Activated CD4-positive, alpha-beta memory T cell treated with anti-CD3 and anti-CD28 coated beads, Interleukin-2, amount 10 ng/mL, durations not matched to agents 7 days and 5 days (primary cell): ENCODE measurements at regions of chr19 and their contacts with region 1.

Region 1: GRCh38 chr19:18281082-18282020 is at the start of gene JUND:
- DNase-seq: peak; percentile 99
- H3K4me3 Mint-ChIP-seq: peak within 1 kb of the TSS; percentile 98
- H3K27ac Mint-ChIP-seq: peak within 1 kb of the TSS; percentile 95
- H3K4me1 Mint-ChIP-seq: peaks cover 50% of the 10 kb centered on the region
- H3K27me3 Mint-ChIP-seq: no peaks in the 10 kb centered on the region
- total RNA-seq, gene JUND: 390 to 402 TPM

Region 2: DNA sequence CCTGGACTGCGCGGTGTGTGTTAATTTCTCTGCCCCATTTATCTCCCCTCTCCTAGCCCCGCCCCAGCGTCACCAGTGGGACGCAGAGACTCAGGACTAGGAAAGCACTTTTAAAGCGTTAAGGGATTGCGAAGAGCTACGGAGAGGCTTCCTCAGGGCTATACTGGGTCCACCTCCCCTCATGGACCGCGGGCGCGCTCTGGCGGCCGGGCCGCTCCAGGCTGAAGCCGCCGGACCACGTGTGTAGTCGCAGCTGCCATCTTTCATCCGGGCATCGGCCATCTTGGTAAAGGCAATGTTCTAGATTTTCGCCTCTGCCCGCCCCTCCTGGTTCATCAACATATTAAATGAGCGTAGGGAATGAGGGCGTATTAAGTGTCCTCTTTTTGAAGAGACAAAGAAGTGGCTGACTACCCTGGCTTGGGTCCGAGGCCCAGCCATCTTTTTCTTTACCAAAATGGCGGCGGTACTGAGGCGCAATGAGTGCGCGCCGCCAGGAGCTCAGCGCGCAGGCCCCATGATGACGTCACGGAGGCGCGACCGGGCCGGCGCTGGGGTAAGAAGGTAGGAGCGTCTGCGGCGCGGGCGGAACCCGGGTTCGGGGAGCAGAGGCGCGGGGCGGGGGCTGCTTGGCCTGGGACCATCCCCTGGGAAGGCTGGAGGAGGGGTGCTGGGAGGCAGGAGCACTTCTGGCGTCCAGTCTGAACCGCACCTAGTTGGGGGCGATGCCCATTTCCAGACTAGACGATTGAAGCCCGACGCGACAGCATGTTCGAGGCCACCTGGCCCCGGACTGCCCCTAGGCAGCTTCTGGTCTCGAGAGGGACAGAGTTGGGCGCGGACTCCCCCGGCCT is 348.6 kb before region 1 on chr19 and contains the start of gene CCDC124:
- CTCF ChIA-PET with region 1: no interaction called
- POLR2A ChIA-PET with region 1: no interaction called
- DNase-seq: peak; percentile 95
- H3K4me3 Mint-ChIP-seq: peak within 1 kb of the TSS; percentile 81
- H3K27ac Mint-ChIP-seq: peak within 1 kb of the TSS; percentile 87
- H3K4me1 Mint-ChIP-seq: peaks cover 36% of the 10 kb centered on the region
- H3K27me3 Mint-ChIP-seq: no peaks in the 10 kb centered on the region
- total RNA-seq, gene CCDC124: 59.3 to 60.8 TPM

Region 3: GRCh38 chr19:18091217-18091608 is 190.1 kb before region 1 on chr19:
- CTCF ChIA-PET with region 1: no interaction called
- POLR2A ChIA-PET with region 1: interaction called, 11 read pairs
- DNase-seq: peak; percentile 88
- H3K4me3 Mint-ChIP-seq: peak overlapping the region; percentile 15
- H3K27ac Mint-ChIP-seq: peak overlapping the region; percentile 98
- H3K4me1 Mint-ChIP-seq: peaks cover 64% of the 10 kb centered on the region
- H3K27me3 Mint-ChIP-seq: no peaks in the 10 kb centered on the region

Region 4: DNA sequence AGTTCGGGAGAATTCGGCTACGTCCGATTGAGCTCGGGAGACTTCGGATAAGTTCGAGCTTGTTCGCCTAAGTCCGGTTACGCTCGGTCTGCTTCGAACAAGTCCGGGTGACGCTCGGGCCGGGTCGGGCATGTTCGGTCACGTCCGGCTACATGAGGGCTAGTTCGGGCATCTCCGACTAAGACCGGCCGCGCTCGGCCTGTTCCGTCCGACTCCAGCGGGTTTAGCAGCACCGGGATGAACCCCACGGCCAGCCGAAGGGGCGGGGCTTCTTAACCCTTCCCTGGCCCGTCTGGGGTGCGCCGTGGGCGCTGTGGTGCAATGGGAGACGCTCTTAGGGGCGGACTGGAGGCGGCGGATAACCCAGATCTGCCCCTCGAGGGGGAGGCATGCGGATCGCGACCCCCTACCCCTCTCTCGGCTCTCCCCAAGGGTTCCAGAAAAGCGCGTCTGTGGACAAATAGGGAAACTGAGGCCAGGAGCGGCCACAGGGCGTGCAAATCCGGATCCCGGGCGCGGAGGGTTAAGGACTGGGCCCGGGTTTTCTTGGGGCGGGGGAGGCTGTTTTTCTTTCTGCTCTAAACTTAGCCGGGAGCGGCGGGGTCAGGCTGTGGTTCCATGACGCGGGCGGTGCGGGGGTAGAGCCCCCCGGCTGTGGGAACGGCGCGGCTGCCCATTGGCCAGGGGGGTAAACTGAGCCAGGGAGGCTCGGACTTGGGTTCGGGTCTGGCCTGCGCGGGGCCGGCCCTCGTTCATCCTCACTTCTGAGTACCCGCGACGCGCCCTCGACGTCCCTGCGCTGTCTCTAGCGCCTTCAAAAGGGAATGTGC is 56.6 kb before region 1 on chr19:
- CTCF ChIA-PET with region 1: interaction called, 12 read pairs
- POLR2A ChIA-PET with region 1: interaction called, 7 read pairs
- DNase-seq: peak; percentile 93
- H3K4me3 Mint-ChIP-seq: peak overlapping the region; percentile 75
- H3K27ac Mint-ChIP-seq: peak overlapping the region; percentile 47
- H3K4me1 Mint-ChIP-seq: peaks cover 18% of the 10 kb centered on the region
- H3K27me3 Mint-ChIP-seq: peaks cover 51% of the 10 kb centered on the region

Region 5: GRCh38 chr19:18297308-18297707 is 16.0 kb after region 1 on chr19:
- CTCF ChIA-PET with region 1: interaction called, 261 read pairs
- POLR2A ChIA-PET with region 1: interaction called, 709 read pairs
- DNase-seq: no peak
- H3K4me3 Mint-ChIP-seq: no peak overlapping the region
- H3K27ac Mint-ChIP-seq: peak overlapping the region; percentile 49
- H3K4me1 Mint-ChIP-seq: peaks cover 70% of the 10 kb centered on the region
- H3K27me3 Mint-ChIP-seq: no peaks in the 10 kb centered on the region

Region 6: GRCh38 chr19:18328340-18329034 is 47.1 kb after region 1 on chr19:
- CTCF ChIA-PET with region 1: interaction called, 263 read pairs
- POLR2A ChIA-PET with region 1: interaction called, 1,184 read pairs
- DNase-seq: peak; percentile 92
- H3K4me3 Mint-ChIP-seq: peak overlapping the region; percentile 47
- H3K27ac Mint-ChIP-seq: peak overlapping the region; percentile 48
- H3K4me1 Mint-ChIP-seq: peaks cover 22% of the 10 kb centered on the region
- H3K27me3 Mint-ChIP-seq: no peaks in the 10 kb centered on the region

Region 7: DNA sequence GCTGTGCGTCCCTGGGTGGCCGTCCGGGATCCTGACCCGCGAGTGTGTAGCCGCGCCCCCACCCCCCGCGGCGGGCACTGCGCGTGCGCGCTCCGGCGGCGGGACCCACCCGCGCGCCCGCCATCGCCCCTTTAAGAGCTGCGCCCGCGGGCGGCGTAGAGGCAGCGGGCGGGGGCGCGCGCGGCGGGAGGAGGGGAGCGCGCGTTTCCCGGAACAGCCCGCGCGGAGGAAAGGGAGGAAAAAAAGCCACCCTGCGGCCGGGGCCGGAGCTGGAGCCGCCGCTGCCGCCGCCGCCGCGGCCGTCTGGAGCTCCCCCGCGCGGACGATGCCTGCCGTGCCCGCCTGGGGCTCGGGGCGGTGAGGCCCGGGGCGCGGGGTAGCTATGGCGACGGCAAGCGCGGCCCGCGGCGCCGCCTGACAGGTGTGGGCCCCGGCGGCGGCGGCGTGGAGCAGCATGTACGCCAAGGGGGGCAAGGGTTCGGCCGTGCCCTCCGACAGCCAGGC is 137.9 kb after region 1 on chr19 and contains the start of gene SSBP4:
- CTCF ChIA-PET with region 1: interaction called, 45 read pairs
- POLR2A ChIA-PET with region 1: interaction called, 115 read pairs
- DNase-seq: peak; percentile 79
- H3K4me3 Mint-ChIP-seq: peak within 1 kb of the TSS; percentile 94
- H3K27ac Mint-ChIP-seq: peak within 1 kb of the TSS; percentile 91
- H3K4me1 Mint-ChIP-seq: peaks cover 84% of the 10 kb centered on the region
- H3K27me3 Mint-ChIP-seq: peaks cover 11% of the 10 kb centered on the region
- total RNA-seq, gene SSBP4: 140 to 153 TPM

Region 8: GRCh38 chr19:18612772-18613588 is 331.6 kb after region 1 on chr19 and contains the start of gene TMEM59L:
- CTCF ChIA-PET with region 1: no interaction called
- POLR2A ChIA-PET with region 1: no interaction called
- DNase-seq: peak; percentile 43
- H3K4me3 Mint-ChIP-seq: peak within 1 kb of the TSS; percentile 17
- H3K27ac Mint-ChIP-seq: no peak within 1 kb of the TSS
- H3K4me1 Mint-ChIP-seq: peaks cover 14% of the 10 kb centered on the region
- H3K27me3 Mint-ChIP-seq: peaks cover 65% of the 10 kb centered on the region
- total RNA-seq, gene TMEM59L: 0.13 TPM in 1 of 2 experiments, not detected in the other